ENCODE measurements at regions of chr6 and their contacts with region 1.

Region 1: GRCh38 chr6:136792410-136793262 is at the start of gene MAP3K5:
- DNase-seq: peak; percentile 95
- ATAC-seq: peak; percentile 86
- H3K4me3 Mint-ChIP-seq: peak within 1 kb of the TSS; percentile 96
- H3K27ac Mint-ChIP-seq: peak within 1 kb of the TSS; percentile 97
- H3K4me1 Mint-ChIP-seq: peaks cover 35% of the 10 kb centered on the region
- H3K27me3 Mint-ChIP-seq: no peaks in the 10 kb centered on the region
- total RNA-seq, gene MAP3K5: 15.0 to 15.1 TPM

Region 2: GRCh38 chr6:136586295-136586694 is 206.3 kb before region 1 on chr6:
- CTCF ChIA-PET with region 1: interaction called, 12 read pairs
- POLR2A ChIA-PET with region 1: no interaction called
- DNase-seq: no peak
- ATAC-seq: no peak
- H3K4me3 Mint-ChIP-seq: no peak overlapping the region
- H3K27ac Mint-ChIP-seq: no peak overlapping the region
- H3K4me1 Mint-ChIP-seq: no peaks in the 10 kb centered on the region
- H3K27me3 Mint-ChIP-seq: no peaks in the 10 kb centered on the region

Region 3: DNA sequence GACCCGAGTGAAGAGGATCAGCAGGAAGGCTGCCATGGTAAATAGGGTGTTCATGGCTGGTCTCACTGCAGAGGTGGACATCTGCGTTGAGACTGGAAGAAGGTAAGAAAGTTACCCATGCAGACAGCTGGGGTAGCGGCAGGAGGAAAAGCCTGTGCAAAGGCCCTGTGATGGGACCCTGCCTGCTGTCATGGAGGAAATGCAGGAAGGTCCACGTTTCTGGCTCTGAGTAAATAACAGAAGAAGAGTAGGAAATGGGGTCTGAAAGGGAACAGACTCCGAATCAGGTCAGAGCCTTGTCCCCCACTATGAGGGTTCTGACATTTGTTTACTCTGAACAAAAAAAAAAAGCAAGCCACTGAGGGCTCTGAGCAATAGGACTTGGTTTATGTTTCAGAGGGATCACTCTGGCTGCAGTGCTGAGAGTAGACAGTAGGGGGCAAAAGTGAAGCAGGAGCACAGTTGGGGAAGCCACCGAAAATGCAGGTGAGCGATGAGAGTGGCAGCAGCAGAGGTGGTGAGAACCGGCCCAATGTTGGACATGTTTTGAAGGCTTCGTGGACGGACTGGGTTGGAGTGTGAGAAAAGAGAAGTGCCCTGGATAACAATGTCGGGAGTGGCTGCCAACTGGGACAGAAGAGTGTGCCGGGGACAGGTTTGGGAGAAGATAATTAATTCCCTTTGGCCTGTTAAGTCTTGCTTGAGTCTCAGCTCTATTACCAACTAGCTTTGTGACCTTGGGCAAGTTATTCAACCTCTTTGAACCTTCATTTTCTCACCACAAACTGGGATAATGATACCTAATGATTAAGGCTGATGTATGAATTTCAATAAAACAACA is 184.5 kb before region 1 on chr6:
- CTCF ChIA-PET with region 1: interaction called, 59 read pairs
- POLR2A ChIA-PET with region 1: no interaction called
- DNase-seq: peak; percentile 85
- ATAC-seq: peak; percentile 91
- H3K4me3 Mint-ChIP-seq: no peak overlapping the region
- H3K27ac Mint-ChIP-seq: no peak overlapping the region
- H3K4me1 Mint-ChIP-seq: peaks cover 15% of the 10 kb centered on the region
- H3K27me3 Mint-ChIP-seq: no peaks in the 10 kb centered on the region

Region 4: GRCh38 chr6:136643850-136644596 is 148.6 kb before region 1 on chr6:
- CTCF ChIA-PET with region 1: interaction called, 496 read pairs
- POLR2A ChIA-PET with region 1: interaction called, 43 read pairs
- DNase-seq: peak; percentile 86
- ATAC-seq: peak; percentile 74
- H3K4me3 Mint-ChIP-seq: no peak overlapping the region
- H3K27ac Mint-ChIP-seq: no peak overlapping the region
- H3K4me1 Mint-ChIP-seq: no peaks in the 10 kb centered on the region
- H3K27me3 Mint-ChIP-seq: no peaks in the 10 kb centered on the region

Region 5: GRCh38 chr6:136716917-136717715 is 75.5 kb before region 1 on chr6:
- CTCF ChIA-PET with region 1: interaction called, 20 read pairs
- POLR2A ChIA-PET with region 1: interaction called, 4 read pairs
- DNase-seq: no peak
- ATAC-seq: no peak
- H3K4me3 Mint-ChIP-seq: no peak overlapping the region
- H3K27ac Mint-ChIP-seq: no peak overlapping the region
- H3K4me1 Mint-ChIP-seq: peaks cover 28% of the 10 kb centered on the region
- H3K27me3 Mint-ChIP-seq: no peaks in the 10 kb centered on the region

Region 6: GRCh38 chr6:136745300-136745699 is 47.3 kb before region 1 on chr6:
- CTCF ChIA-PET with region 1: interaction called, 61 read pairs
- POLR2A ChIA-PET with region 1: interaction called, 8 read pairs
- DNase-seq: no peak
- ATAC-seq: no peak
- H3K4me3 Mint-ChIP-seq: no peak overlapping the region
- H3K27ac Mint-ChIP-seq: no peak overlapping the region
- H3K4me1 Mint-ChIP-seq: peaks cover 24% of the 10 kb centered on the region
- H3K27me3 Mint-ChIP-seq: peaks cover 5% of the 10 kb centered on the region

Region 7: GRCh38 chr6:136772685-136773472 is 19.8 kb before region 1 on chr6:
- CTCF ChIA-PET with region 1: interaction called, 40 read pairs
- POLR2A ChIA-PET with region 1: interaction called, 3 read pairs
- DNase-seq: no peak
- ATAC-seq: no peak
- H3K4me3 Mint-ChIP-seq: no peak overlapping the region
- H3K27ac Mint-ChIP-seq: peak overlapping the region; percentile 9
- H3K4me1 Mint-ChIP-seq: peaks cover 14% of the 10 kb centered on the region
- H3K27me3 Mint-ChIP-seq: no peaks in the 10 kb centered on the region